Endothelial cell of umbilical vein (primary cell): ENCODE measurements at regions of chr6 and their contacts with region 1.

Region 1: GRCh38 chr6:15893556-15894268 is 230.9 kb upstream of the DTNBP1 start:
- DNase-seq: peak; percentile 50
- H3K4me3 ChIP-seq: no peak overlapping the region
- H3K27ac ChIP-seq: no peak overlapping the region
- H3K4me1 ChIP-seq: peaks cover 18% of the 10 kb centered on the region
- H3K27me3 ChIP-seq: no peaks in the 10 kb centered on the region
- CTCF ChIP-seq: peak; percentile 34 to 42
- POLR2A ChIP-seq: no peak

Region 2: GRCh38 chr6:15621203-15622044 is 272.3 kb before region 1 on chr6:
- CTCF ChIA-PET with region 1: no interaction called
- POLR2A ChIA-PET with region 1: no interaction called
- dilution Hi-C with region 1: no loop called
- intact Hi-C with region 1: no loop called
- DNase-seq: peak; percentile 20
- H3K4me3 ChIP-seq: no peak overlapping the region
- H3K27ac ChIP-seq: no peak overlapping the region
- H3K4me1 ChIP-seq: no peaks in the 10 kb centered on the region
- H3K27me3 ChIP-seq: no peaks in the 10 kb centered on the region
- CTCF ChIP-seq: no peak
- POLR2A ChIP-seq: no peak

Region 3: DNA sequence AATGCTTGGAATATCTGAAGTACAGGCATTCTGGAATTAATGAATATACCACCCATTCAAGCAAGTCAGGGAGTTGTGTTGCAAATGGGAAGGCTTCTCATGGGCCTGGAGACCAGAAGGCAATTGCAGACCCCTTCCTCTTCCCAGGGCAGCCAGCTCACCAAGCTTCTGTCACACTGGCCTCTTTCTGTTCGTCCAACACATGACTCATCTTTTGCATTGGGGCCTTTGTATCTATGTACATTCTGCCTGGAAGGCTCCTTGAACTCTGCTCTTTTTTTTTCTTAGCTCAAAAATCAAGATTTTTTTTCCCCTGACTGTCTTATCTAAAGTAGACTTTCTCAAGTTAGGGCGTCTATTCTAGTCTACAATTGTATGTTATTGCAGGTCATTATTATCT is 102.3 kb after region 1 on chr6:
- CTCF ChIA-PET with region 1: no interaction called
- POLR2A ChIA-PET with region 1: no interaction called
- dilution Hi-C with region 1: no loop called
- intact Hi-C with region 1: loop called (anchors 5 kb)
- DNase-seq: peak; percentile 48
- H3K4me3 ChIP-seq: no peak overlapping the region
- H3K27ac ChIP-seq: no peak overlapping the region
- H3K4me1 ChIP-seq: peaks cover 33% of the 10 kb centered on the region
- H3K27me3 ChIP-seq: no peaks in the 10 kb centered on the region
- CTCF ChIP-seq: no peak
- POLR2A ChIP-seq: no peak

Region 4: GRCh38 chr6:16168858-16169257 is 275.1 kb after region 1 on chr6:
- CTCF ChIA-PET with region 1: interaction called, 3 read pairs
- POLR2A ChIA-PET with region 1: no interaction called
- dilution Hi-C with region 1: no loop called
- intact Hi-C with region 1: loop called (anchors 1 kb)
- DNase-seq: peak; percentile 79
- H3K4me3 ChIP-seq: no peak overlapping the region
- H3K27ac ChIP-seq: no peak overlapping the region
- H3K4me1 ChIP-seq: no peaks in the 10 kb centered on the region
- H3K27me3 ChIP-seq: peaks cover 3% of the 10 kb centered on the region in 2 experiments
- CTCF ChIP-seq: peak; percentile 27 to 67
- POLR2A ChIP-seq: no peak

Region 5: GRCh38 chr6:16311763-16312162 is 418.1 kb after region 1 on chr6:
- CTCF ChIA-PET with region 1: no interaction called
- POLR2A ChIA-PET with region 1: no interaction called
- dilution Hi-C with region 1: no loop called
- intact Hi-C with region 1: no loop called
- DNase-seq: no peak
- H3K4me3 ChIP-seq: no peak overlapping the region
- H3K27ac ChIP-seq: no peak overlapping the region
- H3K4me1 ChIP-seq: no peaks in the 10 kb centered on the region
- H3K27me3 ChIP-seq: no peaks in the 10 kb centered on the region
- CTCF ChIP-seq: no peak
- POLR2A ChIP-seq: no peak